ENCODE measurements at regions of chrX and their contacts with region 1.

Region 1: DNA sequence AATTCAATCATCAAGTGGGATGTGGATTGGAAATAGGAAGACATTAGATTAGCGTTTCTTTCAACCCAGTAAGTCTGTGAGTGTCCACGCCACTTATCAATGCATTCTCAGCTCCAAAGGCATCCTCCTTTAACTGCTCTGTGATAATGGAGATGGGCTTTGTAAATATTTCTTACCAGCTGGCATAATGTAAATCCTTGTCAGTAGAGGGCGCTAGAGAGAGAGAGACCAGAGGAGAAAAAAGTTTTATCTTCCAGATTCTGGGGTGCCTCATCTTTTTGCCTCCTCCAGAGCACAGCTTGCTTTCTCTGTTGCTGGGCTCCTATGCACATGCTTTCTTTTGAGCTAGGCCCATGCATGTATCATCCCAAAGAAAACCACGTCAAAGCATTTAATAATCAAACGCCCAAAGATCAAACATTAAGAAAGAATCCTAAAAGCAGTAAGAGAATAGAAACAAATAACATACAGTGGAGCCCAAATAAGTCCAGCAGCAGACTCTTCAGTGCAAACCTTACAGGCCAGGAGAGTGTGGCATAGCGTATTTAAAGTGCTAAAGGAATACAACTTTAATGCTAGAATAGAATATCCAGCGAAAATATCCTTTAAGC is 9.6 kb upstream of the MTMR1 start:
- DNase-seq: peak; percentile 74
- ATAC-seq: peak; percentile 43; the same call in 1 of the 2 replicates
- H3K4me3 ChIP-seq: no peak overlapping the region
- H3K27ac ChIP-seq: no peak overlapping the region
- H3K4me1 ChIP-seq: peaks cover 7% of the 10 kb centered on the region
- H3K27me3 ChIP-seq: no peaks in the 10 kb centered on the region
- CTCF ChIP-seq: peak; percentile 69

Region 2: DNA sequence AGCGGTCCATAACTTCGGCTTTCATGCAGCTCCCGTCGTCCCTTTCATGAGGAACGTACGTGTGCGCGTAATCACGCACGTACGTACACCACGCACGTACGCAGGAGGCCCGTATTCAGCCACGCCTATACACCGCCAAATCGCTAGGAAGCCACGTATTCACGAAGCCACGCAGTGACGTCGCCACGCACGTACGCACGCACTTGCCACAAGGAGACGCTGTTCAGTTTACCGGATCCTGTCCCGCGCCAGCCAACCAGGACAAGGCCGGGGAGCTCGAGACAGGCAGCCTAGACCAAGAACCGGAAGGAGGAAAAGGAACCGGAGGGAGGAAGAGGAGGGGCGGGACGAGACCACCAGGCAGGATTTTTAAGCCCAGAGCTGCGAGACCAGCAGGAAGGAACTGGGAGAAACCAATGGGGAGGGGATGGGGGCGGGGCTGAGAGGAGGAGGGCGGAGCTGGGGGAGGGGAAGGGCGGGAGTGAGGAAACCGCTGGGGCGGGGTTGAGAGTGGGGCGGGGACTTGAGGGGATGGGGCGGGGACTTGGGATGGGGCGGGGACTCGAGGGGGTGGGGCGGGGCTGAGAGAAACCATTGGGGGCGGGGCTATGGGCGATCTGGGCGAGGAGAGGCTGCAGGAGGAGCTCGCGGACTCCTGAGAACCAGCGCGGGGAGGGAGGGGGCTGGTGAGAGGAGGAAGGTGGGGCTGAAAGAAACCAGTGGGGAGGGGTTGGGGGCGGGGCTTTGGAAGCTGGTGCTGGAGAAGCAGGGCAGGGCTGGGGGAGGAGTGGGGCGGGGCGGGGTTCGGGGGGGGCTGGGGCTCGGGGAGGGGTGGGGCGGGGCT is 745.0 kb before region 1 on chrX and contains the start of gene EOLA2:
- CTCF ChIA-PET with region 1: interaction called, 11 read pairs
- POLR2A ChIA-PET with region 1: no interaction called
- intact Hi-C with region 1: no loop called
- DNase-seq: peak; percentile 98
- ATAC-seq: peak; percentile 68
- H3K4me3 ChIP-seq: peak within 1 kb of the TSS; percentile 90
- H3K27ac ChIP-seq: peak within 1 kb of the TSS; percentile 95
- H3K4me1 ChIP-seq: peaks cover 4% of the 10 kb centered on the region; the same call in 1 of the 2 replicates
- H3K27me3 ChIP-seq: no peaks in the 10 kb centered on the region
- CTCF ChIP-seq: peak; percentile 56
- total RNA-seq, gene EOLA2: 35.7 and 49.8 TPM in 2 replicates

Region 3: GRCh38 chrX:149950681-149951080 is 733.0 kb before region 1 on chrX:
- CTCF ChIA-PET with region 1: no interaction called
- POLR2A ChIA-PET with region 1: no interaction called
- intact Hi-C with region 1: loop called (anchors 1 kb)
- DNase-seq: peak; percentile 73
- ATAC-seq: peak; percentile 72
- H3K4me3 ChIP-seq: no peak overlapping the region
- H3K27ac ChIP-seq: no peak overlapping the region
- H3K4me1 ChIP-seq: peaks cover 5% of the 10 kb centered on the region; the same call in 1 of the 2 replicates
- H3K27me3 ChIP-seq: no peaks in the 10 kb centered on the region
- CTCF ChIP-seq: peak; percentile 69

Region 4: DNA sequence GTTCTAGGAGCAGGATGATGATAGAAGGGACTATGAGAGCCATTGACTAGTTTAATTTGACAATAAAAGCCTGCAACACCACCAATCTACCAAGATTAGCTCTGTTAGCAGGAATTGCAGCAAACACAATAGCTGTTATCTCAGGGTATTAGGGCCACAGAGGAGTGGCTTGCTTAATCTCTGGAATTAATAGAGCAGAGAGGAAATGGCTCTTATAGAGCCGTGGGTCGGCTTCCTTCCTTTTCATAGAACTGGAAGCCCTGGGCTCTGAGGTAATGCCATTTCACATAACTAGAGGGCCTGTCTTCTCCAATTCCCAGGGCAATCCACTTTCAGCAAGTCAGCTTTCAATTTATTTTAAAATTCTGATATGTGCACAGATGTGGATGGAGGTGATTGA is 237.5 kb before region 1 on chrX:
- CTCF ChIA-PET with region 1: no interaction called
- POLR2A ChIA-PET with region 1: no interaction called
- intact Hi-C with region 1: no loop called
- DNase-seq: no peak
- ATAC-seq: no peak
- H3K4me3 ChIP-seq: no peak overlapping the region
- H3K27ac ChIP-seq: no peak overlapping the region
- H3K4me1 ChIP-seq: no peaks in the 10 kb centered on the region
- H3K27me3 ChIP-seq: no peaks in the 10 kb centered on the region
- CTCF ChIP-seq: no peak

Region 5: DNA sequence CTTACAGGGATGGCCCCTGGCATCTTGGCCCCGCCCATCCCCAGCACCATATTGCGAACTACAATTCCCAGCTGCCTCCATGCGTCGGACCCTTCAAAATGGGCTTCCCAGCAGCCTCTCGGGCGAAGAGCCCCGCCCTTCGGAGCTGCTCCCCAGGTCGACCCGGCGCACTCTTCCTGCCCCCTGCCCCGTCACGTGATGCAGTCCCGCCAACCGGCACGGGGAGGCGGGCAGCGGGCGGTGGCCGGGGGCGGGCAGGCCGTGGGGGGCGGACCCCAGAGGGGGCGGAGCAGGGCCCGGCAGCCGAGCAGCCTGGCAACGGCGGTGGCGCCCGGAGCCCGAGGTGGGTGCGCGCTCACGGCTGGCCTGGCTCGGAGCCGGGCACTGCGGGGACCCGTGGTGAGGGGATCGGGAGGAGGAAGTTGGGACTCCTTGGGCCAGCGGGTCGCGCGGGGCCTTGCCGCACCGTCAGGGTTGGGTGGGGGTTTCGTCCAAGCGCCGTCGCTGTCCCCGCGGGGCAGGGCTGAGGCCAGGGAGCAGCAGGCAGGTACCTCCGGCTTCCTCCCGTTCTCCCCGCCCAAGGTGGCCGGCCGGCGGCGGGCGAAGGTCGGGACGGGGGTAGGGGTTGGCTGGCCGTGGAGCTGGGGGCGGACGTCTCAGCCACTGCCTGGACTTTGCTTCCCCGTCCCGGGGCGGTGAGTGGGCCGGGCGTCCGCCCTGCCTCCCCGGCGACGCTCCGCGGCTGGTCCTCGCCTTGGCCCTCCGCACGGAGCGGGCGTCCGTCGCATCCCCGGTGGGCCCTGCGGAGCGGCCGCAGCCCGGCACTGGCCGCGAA is 115.1 kb before region 1 on chrX and contains the start of gene MTM1:
- CTCF ChIA-PET with region 1: no interaction called
- POLR2A ChIA-PET with region 1: no interaction called
- intact Hi-C with region 1: no loop called
- DNase-seq: peak; percentile 96
- ATAC-seq: peak; percentile 85
- H3K4me3 ChIP-seq: peak within 1 kb of the TSS; percentile 83
- H3K27ac ChIP-seq: peak within 1 kb of the TSS; percentile 11; the same call in 1 of the 2 replicates
- H3K4me1 ChIP-seq: peaks cover 42% of the 10 kb centered on the region
- H3K27me3 ChIP-seq: no peaks in the 10 kb centered on the region
- CTCF ChIP-seq: no peak
- total RNA-seq, gene MTM1: 5.5 and 13.7 TPM in 2 replicates

Region 6: DNA sequence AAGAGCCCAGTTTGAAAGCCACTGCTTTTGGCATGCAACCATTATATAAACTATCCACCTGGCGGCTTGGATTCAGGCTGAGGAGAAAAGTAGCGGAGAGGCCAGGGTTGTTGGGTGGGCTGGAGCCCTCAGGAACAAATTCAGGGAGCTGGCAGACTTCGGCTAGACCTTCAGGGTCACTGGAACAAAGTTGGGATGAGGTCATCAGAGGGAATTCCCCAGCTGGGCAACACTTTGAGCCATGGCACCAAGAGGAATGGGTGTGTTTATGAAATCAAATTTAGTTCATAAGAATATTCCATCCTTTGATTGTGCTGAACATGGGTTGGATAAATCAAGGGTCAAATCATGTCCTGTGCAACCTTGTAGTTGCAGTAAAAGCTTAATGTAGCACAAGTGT is 31.5 kb after region 1 on chrX:
- CTCF ChIA-PET with region 1: interaction called, 3 read pairs
- POLR2A ChIA-PET with region 1: no interaction called
- intact Hi-C with region 1: loop called (anchors 1 kb)
- DNase-seq: no peak
- ATAC-seq: peak; percentile 27; the same call in 1 of the 2 replicates
- H3K4me3 ChIP-seq: no peak overlapping the region
- H3K27ac ChIP-seq: no peak overlapping the region
- H3K4me1 ChIP-seq: peaks cover 10% of the 10 kb centered on the region; the same call in 1 of the 2 replicates
- H3K27me3 ChIP-seq: no peaks in the 10 kb centered on the region
- CTCF ChIP-seq: no peak

Region 7: DNA sequence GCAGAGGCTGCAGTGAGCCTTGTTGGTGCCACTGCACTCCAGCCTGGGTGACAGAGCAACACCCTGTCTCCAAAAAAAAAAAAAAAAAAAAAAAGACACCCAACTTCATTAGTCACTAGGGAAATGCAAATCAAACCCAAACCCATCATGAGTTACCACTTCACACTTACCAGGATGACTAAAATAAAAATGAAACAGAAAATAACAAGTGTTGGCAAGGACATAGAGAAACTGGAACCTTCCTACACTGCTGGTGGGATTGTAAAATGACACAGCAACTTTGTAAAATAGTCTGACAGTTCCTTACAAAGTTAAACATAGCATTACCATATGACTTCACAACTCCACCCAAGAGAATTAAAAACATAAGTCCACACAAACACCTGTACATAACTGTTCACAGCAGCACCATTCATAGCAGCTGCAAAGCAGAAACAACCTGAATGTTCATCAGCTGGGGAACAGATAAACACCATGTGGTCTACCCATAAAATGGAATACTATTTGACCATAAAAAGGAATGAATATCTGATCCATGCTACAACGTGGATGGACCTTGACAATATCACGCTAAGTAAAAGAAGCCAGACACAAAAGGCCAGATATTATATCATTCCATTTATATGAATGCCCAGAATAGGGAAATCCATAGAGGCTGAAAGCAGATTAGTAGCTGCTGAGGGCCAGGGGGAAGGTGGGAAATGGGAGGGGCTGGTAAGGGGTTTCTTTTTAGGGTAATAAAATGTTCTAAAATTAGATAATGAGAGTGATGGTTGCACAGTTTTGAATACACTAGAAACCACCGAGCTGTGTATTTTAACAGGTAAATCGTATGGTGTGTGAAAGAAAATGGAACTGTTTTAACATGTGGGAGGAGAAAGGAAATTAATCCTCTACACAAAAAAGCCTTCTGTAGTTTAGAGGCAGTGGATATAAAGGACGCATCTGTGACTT is 196.5 kb after region 1 on chrX:
- CTCF ChIA-PET with region 1: no interaction called
- POLR2A ChIA-PET with region 1: no interaction called
- intact Hi-C with region 1: no loop called
- DNase-seq: no peak
- ATAC-seq: no peak
- H3K4me3 ChIP-seq: no peak overlapping the region
- H3K27ac ChIP-seq: no peak overlapping the region
- H3K4me1 ChIP-seq: no peaks in the 10 kb centered on the region
- H3K27me3 ChIP-seq: no peaks in the 10 kb centered on the region
- CTCF ChIP-seq: no peak